Naive thymus-derived CD4-positive, alpha-beta T cell (primary cell): ENCODE measurements at regions of chr1 and their contacts with region 1.

Region 1: DNA sequence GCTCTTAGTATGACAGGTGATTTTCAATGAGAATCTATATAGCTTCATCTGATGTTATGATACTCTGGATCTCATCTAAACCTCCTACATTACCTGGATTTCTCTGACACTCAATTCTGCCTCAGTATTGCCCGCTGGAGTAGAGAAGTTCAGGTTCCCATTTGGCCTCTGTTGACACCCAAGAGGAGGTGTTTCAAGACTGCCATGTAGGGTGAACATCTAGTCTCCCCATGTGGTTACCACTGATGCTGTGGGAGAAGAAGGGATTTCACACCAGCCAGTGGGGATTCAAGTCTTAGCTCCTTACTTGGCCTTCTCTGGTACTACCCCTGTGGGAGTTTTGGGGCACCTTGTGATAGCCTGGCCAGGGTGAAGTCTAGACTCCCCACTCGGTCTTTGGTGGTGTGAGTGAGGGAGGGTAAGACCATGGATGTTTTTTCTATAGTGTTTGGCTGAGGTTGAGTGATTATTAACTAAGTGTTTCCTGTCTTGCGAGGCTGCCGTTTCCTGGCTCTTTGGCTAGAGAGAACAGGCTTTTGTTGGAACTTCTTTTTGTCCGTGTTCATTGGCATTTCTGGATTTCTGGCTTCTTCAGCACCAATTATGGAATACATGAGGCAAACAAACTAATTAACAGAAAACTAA is 90.7 kb downstream of the RHOU start:
- DNase-seq: no peak
- ATAC-seq: no peak
- H3K4me3 ChIP-seq: no peak overlapping the region
- H3K4me3 Mint-ChIP-seq: peak overlapping the region in 3 of 10 donors; percentile 3 to 11 (median 10)
- H3K27ac ChIP-seq: no peak overlapping the region
- H3K27ac Mint-ChIP-seq: peak overlapping the region in 1 of 9 donors; percentile 81
- H3K4me1 ChIP-seq: peaks cover 4 to 12% of the 10 kb centered on the region in 2 donors
- H3K4me1 Mint-ChIP-seq: peaks cover 9 to 42% (median 13%) of the 10 kb centered on the region in 7 donors
- H3K27me3 ChIP-seq: no peaks in the 10 kb centered on the region
- H3K27me3 Mint-ChIP-seq: peaks cover 0 to 12% (median 0%) of the 10 kb centered on the region in 5 donors

Region 2: DNA sequence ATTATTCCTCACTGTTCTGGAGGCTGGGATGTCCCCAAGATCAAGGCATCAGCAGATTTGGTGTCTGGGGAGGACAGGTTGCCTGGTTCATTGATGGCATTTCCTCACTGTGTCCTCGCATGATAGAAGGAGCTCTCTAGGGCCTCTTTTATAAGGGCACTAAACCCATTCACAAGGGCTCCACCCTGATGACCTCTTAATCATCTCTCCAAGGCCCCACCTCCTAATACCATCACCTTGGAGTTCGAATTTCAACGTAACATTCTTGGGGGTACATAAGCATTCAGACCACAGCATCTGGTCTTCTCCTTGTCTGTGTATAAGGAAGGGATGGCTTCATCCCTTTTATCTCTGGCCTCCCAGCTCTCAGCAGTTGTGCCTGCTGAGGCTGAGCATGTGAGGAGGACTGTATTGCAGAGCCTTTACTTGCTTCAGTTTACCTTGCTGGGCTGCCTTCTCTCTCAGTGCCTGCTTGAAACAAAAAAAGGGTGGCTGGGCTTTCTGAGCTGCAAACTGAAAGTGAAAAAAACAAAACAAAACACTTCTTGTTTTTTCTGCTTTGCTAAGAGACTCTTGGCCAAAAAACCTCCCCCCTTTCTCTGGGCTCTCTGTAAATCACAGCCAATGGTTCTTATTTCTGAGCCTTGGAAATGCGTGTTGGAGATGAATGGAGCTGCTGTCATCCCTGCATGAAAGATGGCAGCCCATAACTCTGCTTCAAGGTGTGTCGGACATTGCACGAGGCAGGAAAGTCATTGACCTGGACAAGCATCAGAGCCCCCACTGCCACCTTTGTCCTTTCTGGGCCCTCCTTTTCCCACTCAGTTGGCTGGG is 14.9 kb before region 1 on chr1:
- CTCF ChIA-PET with region 1: no interaction called
- POLR2A ChIA-PET with region 1: no interaction called
- intact Hi-C with region 1: loop called in 1 of 2 experiments (anchors 2 kb)
- DNase-seq: peak in 1 of 9 donors; percentile 22
- ATAC-seq: no peak
- H3K4me3 ChIP-seq: no peak overlapping the region
- H3K4me3 Mint-ChIP-seq: peak overlapping the region in 2 of 10 donors; percentile 28 to 69
- H3K27ac ChIP-seq: no peak overlapping the region
- H3K27ac Mint-ChIP-seq: peak overlapping the region; percentile 17 to 95 (median 52)
- H3K4me1 ChIP-seq: peaks cover 7 to 11% of the 10 kb centered on the region in 2 donors
- H3K4me1 Mint-ChIP-seq: peaks cover 22 to 67% (median 31%) of the 10 kb centered on the region in 7 donors
- H3K27me3 ChIP-seq: no peaks in the 10 kb centered on the region
- H3K27me3 Mint-ChIP-seq: no peaks in the 10 kb centered on the region

Region 3: DNA sequence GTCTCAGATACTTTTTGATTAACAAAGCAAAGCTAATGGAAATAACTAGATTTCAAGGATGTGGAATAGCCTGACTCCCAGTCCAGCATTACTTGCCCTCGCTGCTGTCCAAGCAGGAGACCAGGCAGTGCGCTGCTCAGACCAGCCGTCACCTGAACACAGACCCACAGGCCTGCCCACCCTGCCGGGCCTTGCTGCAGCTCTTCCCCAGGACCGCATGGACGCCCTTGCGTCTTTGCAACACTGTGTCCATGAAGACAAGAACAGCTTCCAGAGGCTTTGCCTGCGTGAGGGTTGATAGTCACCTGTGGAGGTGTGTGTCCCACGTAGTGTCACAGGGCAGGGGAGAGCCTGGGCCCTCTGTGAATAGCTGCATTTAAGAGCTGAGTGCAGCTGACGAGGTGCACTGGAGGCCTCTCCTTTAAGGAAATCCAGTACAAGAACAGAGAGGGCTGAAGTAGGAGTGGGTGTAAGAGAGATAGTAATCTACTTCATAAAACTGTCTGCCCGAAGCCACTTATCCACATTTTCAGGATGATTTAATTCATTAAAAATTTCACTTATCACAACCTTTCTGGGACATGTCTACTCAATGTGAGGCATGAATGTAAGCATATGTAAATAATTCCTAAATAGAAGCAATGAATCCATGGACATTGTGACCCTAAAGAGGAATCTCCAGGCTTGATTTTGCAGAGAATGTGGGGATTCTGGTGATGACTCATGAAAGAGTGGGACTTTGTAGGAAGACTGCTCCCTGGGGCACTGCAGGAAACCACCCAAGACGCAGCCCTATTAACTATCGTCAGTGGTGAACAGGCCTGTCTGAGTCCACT is 268.7 kb after region 1 on chr1:
- CTCF ChIA-PET with region 1: no interaction called
- POLR2A ChIA-PET with region 1: no interaction called
- intact Hi-C with region 1: loop called in 1 of 2 experiments (anchors 10 kb)
- DNase-seq: no peak
- ATAC-seq: no peak
- H3K4me3 ChIP-seq: no peak overlapping the region
- H3K4me3 Mint-ChIP-seq: no peak overlapping the region
- H3K27ac ChIP-seq: no peak overlapping the region
- H3K27ac Mint-ChIP-seq: no peak overlapping the region
- H3K4me1 ChIP-seq: no peaks in the 10 kb centered on the region
- H3K4me1 Mint-ChIP-seq: peaks cover 0 to 26% (median 16%) of the 10 kb centered on the region in 7 donors
- H3K27me3 ChIP-seq: no peaks in the 10 kb centered on the region
- H3K27me3 Mint-ChIP-seq: peaks cover 0 to 19% (median 0%) of the 10 kb centered on the region in 5 donors

Region 4: DNA sequence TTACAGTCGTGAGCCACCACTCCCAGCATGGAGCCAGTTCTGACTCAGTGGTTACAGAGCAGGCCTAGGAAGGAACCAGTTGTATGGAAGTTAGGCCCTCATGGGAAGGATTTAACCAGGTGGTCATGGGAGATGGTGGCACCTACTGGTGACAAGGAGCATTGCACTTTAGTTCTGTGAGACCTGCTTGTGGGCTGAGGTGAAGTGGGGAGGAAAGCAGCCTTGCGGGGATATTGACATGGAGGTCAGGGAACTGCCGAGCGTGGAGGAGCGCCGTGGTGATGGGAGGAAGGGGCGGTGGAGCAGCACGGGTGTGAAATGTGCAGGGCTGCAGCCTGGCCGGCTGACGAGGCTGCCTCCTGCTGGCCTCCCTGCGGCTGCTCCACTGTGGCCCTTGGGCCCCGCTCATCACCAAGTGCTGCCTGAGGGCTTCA is 1341.5 kb after region 1 on chr1:
- CTCF ChIA-PET with region 1: no interaction called
- POLR2A ChIA-PET with region 1: no interaction called
- intact Hi-C with region 1: no loop called
- DNase-seq: peak in 8 of 9 donors; percentile 21 to 50 (median 33)
- ATAC-seq: peak; percentile 77
- H3K4me3 ChIP-seq: no peak overlapping the region
- H3K4me3 Mint-ChIP-seq: peak overlapping the region in 2 of 10 donors; percentile 7 to 36
- H3K27ac ChIP-seq: no peak overlapping the region
- H3K27ac Mint-ChIP-seq: peak overlapping the region in 1 of 9 donors; percentile 48
- H3K4me1 ChIP-seq: no peaks in the 10 kb centered on the region
- H3K4me1 Mint-ChIP-seq: peaks cover 23 to 34% (median 31%) of the 10 kb centered on the region in 7 donors
- H3K27me3 ChIP-seq: no peaks in the 10 kb centered on the region
- H3K27me3 Mint-ChIP-seq: no peaks in the 10 kb centered on the region